Activated CD8-positive, alpha-beta memory T cell treated with anti-CD3 and anti-CD28 coated beads, Interleukin-2, amount 10 ng/mL, durations not matched to agents 7 days and 5 days (primary cell): ENCODE measurements at regions of chr11 and their contacts with region 1.

Region 1: GRCh38 chr11:118435893-118436624 is at the start of gene KMT2A:
- DNase-seq: peak; percentile 93
- ATAC-seq: peak; percentile 54
- H3K4me3 Mint-ChIP-seq: peak within 1 kb of the TSS; percentile 88
- H3K27ac Mint-ChIP-seq: peak within 1 kb of the TSS; percentile 94
- H3K4me1 Mint-ChIP-seq: peaks cover 38% of the 10 kb centered on the region
- H3K27me3 Mint-ChIP-seq: peaks cover 4% of the 10 kb centered on the region
- total RNA-seq, gene KMT2A: 116 to 125 TPM

Region 2: DNA sequence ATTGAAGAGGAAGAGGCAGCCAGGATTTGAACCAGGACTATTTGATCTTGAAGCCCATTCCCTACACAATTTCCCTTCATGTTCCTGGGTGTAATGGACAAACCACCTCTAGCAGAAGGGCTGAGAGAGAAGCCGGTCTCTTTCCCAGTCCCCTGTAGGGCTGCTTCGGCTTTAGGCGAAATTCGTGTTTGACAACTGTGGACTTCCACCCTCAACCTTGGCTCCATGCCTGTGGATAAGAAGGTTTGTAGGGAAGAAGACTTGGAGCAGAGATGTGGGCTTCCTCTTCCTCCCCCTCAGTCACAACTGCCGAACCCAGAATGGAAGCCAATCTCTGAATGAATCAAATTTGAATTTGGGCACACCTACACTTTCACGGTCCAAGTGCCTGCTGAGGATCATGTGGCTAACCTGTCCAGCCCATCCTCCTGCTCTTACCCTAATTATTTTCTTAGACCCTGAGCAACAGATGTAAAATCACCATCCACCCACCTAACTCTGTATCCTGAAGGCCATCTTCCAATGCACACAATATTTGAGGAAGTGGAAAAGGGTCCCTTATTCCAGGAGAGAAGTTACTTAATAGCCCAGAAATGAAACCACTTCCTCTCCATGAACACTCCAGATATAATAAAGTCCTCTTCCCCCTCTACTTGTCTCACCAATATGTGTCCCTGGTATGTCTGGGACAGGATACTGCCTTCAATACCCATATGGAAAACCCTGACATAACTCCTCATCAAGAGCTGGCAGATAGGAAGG is 249.5 kb before region 1 on chr11:
- CTCF ChIA-PET with region 1: no interaction called
- DNase-seq: no peak
- ATAC-seq: no peak
- H3K4me3 Mint-ChIP-seq: no peak overlapping the region
- H3K27ac Mint-ChIP-seq: no peak overlapping the region
- H3K4me1 Mint-ChIP-seq: peaks cover 4% of the 10 kb centered on the region
- H3K27me3 Mint-ChIP-seq: peaks cover 44% of the 10 kb centered on the region

Region 3: DNA sequence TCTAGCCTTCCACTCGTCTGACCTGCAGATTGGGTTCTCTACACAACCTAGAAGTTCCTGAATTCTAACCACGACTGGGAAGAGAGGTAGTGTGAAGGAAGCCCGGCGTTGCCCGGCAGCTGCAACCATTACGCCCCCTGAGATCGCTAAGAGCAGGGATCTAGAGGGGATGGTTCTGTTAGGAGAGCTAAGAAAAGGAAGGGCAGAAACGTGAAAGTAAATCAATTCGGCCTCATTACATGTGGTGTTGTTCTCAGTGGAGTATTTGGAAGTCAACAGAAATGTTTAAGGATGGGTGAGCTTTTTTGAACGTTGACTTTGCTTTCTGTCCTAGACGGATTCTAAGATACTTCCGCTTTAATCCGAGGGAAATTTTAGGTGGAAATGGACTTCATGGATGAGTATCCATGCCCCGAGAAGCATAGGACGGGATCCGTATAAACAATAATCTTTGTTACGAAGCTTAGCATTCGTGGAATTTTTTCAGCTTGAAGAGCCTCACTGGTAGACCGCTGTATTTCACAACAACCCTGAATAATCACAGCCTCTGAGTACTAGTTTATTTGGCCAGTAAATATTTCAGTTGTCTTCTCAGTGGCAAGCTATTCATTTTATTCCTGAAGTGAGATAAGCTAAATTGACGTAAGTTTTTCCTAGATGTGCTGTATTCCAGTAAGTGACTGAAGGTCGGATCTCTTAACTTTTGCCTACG is 34.0 kb before region 1 on chr11:
- CTCF ChIA-PET with region 1: interaction called, 10 read pairs
- DNase-seq: no peak
- ATAC-seq: no peak
- H3K4me3 Mint-ChIP-seq: peak overlapping the region; percentile 93
- H3K27ac Mint-ChIP-seq: peak overlapping the region; percentile 99
- H3K4me1 Mint-ChIP-seq: peaks cover 79% of the 10 kb centered on the region
- H3K27me3 Mint-ChIP-seq: no peaks in the 10 kb centered on the region

Region 4: DNA sequence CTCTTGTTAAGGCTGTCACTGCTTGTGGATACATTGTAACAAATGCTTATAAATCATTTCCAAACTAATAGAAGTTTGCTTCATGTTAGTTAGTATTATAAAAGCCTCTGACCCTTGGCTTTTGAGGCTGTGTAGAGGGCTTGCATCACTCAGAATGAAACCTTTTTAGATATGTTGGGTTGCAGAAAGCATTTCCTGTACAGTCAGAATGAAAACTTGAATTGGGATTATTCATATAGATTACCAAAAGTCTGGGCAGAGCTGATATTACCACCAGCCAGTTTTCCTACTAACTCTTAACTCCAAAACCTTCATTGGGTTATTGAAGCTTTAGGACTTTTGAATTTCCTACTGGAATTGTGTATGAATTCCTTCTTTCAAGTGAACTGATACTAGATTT is 12.2 kb after region 1 on chr11:
- CTCF ChIA-PET with region 1: interaction called, 11 read pairs
- DNase-seq: peak; percentile 63
- ATAC-seq: peak; percentile 88
- H3K4me3 Mint-ChIP-seq: peak overlapping the region; percentile 14
- H3K27ac Mint-ChIP-seq: peak overlapping the region; percentile 68
- H3K4me1 Mint-ChIP-seq: peaks cover 68% of the 10 kb centered on the region
- H3K27me3 Mint-ChIP-seq: no peaks in the 10 kb centered on the region

Region 5: DNA sequence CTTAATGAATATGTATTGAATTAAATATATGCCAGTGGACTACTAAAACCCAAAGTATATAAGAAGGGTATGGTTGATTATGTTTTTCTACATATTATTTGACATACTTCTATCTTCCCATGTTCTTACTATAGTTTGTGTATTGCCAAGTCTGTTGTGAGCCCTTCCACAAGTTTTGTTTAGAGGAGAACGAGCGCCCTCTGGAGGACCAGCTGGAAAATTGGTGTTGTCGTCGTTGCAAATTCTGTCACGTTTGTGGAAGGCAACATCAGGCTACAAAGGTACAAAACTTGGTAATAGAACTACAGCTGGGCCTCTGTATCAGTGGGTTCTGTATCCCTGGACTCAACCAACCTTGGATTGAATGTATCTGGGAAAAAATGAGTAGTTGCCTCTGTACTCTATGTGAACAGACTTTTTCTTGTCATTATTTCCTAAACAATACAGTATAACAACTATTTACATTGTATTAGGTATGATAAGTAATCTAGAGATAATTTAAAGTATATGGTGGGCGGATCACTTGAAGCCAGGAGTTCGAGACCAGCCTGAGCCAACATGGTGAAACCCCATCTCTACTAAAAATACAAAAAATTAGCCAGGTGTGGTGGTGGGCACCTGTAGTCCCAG is 52.5 kb after region 1 on chr11:
- CTCF ChIA-PET with region 1: interaction called, 17 read pairs
- DNase-seq: peak; percentile 85
- ATAC-seq: peak; percentile 72
- H3K4me3 Mint-ChIP-seq: no peak overlapping the region
- H3K27ac Mint-ChIP-seq: peak overlapping the region; percentile 29
- H3K4me1 Mint-ChIP-seq: peaks cover 5% of the 10 kb centered on the region
- H3K27me3 Mint-ChIP-seq: no peaks in the 10 kb centered on the region